Right ventricle myocardium inferior (tissue), 1 donor: ENCODE measurements at regions of chr7 and their contacts with region 1.

Region 1: GRCh38 chr7:44082541-44083207 is 344 bp upstream of the POLM start:
- DNase-seq: peak; percentile 100
- ATAC-seq: peak; percentile 96

Region 2: DNA sequence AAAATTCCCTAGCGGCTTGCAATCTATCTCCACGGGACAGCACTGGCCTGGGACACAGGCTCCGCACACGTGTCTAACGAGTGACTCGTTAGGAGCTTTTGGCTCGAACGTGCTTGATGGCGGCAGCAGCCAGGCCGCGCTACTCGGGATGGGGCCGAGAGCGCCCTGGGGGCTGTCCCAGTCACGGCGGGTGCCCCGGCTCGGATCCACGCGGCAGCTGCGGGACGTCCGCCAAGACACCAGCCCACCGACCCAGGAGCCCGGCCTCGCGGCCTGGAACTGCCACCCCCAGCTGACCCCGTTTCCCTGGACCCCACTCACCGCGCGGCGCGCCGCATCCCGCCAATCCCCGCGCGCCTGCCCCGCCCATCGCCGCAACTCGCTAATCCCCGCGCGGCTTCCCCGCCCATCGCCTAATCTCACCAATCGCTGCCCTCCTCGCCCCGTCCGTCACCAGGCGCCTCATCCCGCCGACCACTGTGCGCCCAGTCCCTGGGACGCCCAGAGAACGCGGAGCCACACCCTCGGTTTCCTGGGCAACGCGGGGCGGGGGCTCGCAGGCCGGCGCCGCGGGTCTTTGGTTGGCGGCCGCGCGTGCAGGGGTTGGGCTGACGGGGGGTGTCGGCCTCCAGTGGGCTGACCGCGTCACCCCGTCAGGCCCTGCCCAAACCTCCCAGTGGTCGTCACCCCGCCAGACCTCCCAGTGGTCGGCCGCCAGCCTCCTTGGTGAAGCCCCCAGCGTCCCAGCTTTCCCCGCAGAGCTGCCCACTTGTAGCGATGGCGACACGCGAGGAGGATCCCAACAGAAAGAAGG is 40.7 kb after region 1 on chr7 and contains the start of gene POLD2:
- intact Hi-C with region 1: loop called (anchors 2 kb)
- DNase-seq: peak; percentile 99
- ATAC-seq: peak; percentile 99
- total RNA-seq, gene POLD2: 87.3 TPM